ENCODE measurements at regions of chr22 and their contacts with region 1.

Region 1: GRCh38 chr22:29603358-29604075 is at the start of gene NF2:
- DNase-seq: peak; percentile 100
- H3K4me3 ChIP-seq: peak within 1 kb of the TSS; percentile 98 to 99 (median 98)
- H3K27ac ChIP-seq: peak within 1 kb of the TSS; percentile 86
- H3K4me1 ChIP-seq: peaks cover 35% of the 10 kb centered on the region
- H3K27me3 ChIP-seq: no peaks in the 10 kb centered on the region
- CTCF ChIP-seq: no peak
- POLR2A ChIP-seq: peak; percentile 82
- total RNA-seq, gene NF2: 114 and 115 TPM in 2 replicates

Region 2: GRCh38 chr22:29470159-29470855 is 133.2 kb before region 1 on chr22:
- CTCF ChIA-PET with region 1: no interaction called
- POLR2A ChIA-PET with region 1: no interaction called
- dilution Hi-C with region 1: no loop called
- intact Hi-C with region 1: no loop called
- DNase-seq: peak; percentile 26
- H3K4me3 ChIP-seq: no peak overlapping the region
- H3K27ac ChIP-seq: no peak overlapping the region
- H3K4me1 ChIP-seq: no peaks in the 10 kb centered on the region
- H3K27me3 ChIP-seq: peaks cover 8 to 14% of the 10 kb centered on the region in 2 experiments
- CTCF ChIP-seq: peak; percentile 93 to 95
- POLR2A ChIP-seq: no peak

Region 3: GRCh38 chr22:29553351-29554224 is 49.9 kb before region 1 on chr22 and contains the start of gene THOC5:
- CTCF ChIA-PET with region 1: interaction called, 6 read pairs
- POLR2A ChIA-PET with region 1: interaction called, 4 read pairs
- dilution Hi-C with region 1: no loop called
- intact Hi-C with region 1: loop called (anchors 1 kb)
- DNase-seq: peak; percentile 97
- H3K4me3 ChIP-seq: peak within 1 kb of the TSS; percentile 43 to 91 (median 47)
- H3K27ac ChIP-seq: peak within 1 kb of the TSS; percentile 67
- H3K4me1 ChIP-seq: peaks cover 8% of the 10 kb centered on the region
- H3K27me3 ChIP-seq: no peaks in the 10 kb centered on the region
- CTCF ChIP-seq: peak; percentile 77 to 81
- POLR2A ChIP-seq: peak; percentile 84
- total RNA-seq, gene THOC5: 73.8 and 82.9 TPM in 2 replicates

Region 4: DNA sequence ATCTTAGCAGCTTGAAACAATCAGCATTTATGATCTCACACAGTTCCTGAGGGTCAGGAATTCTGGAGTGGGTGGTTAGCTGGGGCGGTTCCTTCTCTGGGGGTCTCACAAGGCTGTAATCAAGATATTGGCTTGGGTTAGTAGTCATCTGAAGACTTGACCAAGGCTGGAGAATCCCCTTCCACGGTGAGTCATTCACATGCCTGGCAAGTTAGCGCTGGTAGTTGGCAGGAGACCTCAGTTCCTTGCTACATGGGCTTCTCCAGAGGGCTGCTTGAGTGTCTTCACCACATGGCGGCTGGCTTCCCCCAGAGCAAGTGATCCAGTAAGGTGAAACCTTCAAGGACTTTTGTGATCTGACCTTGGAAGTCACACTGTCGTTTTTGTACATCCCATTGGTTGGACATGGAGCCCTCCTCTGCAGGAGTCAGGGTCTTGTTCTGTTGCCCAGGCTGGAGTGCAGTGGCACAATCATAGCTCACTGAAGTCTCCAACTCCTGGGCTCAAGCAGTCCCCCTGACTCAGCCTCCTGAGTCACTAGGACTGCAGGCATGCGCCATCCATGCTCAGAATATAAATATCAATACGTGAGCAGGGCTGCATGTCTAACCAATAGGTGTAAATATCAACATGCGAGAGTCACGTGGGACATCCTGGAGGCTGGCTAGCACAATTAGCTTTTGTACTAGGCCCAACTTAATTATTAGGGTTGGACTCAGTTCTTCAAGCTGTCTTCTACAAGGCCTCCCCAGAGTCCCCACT is 15.4 kb before region 1 on chr22:
- CTCF ChIA-PET with region 1: interaction called, 28 read pairs
- POLR2A ChIA-PET with region 1: no interaction called
- dilution Hi-C with region 1: no loop called
- intact Hi-C with region 1: no loop called
- DNase-seq: peak; percentile 42
- H3K4me3 ChIP-seq: no peak overlapping the region
- H3K27ac ChIP-seq: no peak overlapping the region
- H3K4me1 ChIP-seq: no peaks in the 10 kb centered on the region
- H3K27me3 ChIP-seq: no peaks in the 10 kb centered on the region
- CTCF ChIP-seq: no peak
- POLR2A ChIP-seq: no peak

Region 5: DNA sequence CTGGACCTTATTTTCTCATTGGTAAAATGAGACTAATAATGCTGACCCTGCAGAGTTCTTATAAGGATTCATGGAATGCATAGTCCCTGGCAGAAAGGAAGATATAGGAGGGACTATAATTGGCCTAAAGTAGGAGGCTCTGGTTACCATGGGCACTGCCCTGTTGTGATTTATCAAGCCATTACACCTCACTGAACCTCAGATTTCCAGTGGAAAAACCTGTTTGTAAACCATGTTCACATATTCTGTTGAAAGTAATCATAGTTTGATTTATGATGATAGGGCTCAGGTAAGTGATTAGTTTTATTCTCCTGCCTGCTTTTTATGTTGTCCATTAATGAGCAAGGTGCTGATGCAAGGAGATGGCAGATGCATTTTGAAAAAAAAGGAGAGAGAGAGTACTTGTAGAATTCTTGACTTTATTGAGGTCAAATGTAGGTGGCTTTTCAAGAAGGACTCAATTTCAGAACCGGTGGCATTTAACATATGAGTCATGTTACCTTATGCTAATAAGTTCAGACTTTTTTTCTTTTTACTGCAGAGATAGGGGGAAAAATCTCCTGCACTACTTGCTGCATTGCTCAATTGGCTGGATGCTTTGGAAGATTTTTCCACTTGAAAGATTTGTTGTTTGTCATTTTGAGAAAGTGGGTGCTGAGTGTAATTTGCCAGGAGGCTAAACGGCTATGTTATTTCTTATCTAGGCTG is 14.6 kb after region 1 on chr22:
- CTCF ChIA-PET with region 1: interaction called, 23 read pairs
- POLR2A ChIA-PET with region 1: interaction called, 8 read pairs
- dilution Hi-C with region 1: no loop called
- intact Hi-C with region 1: loop called (anchors 1 kb)
- DNase-seq: no peak
- H3K4me3 ChIP-seq: no peak overlapping the region
- H3K27ac ChIP-seq: peak overlapping the region; percentile 4
- H3K4me1 ChIP-seq: peaks cover 38% of the 10 kb centered on the region
- H3K27me3 ChIP-seq: no peaks in the 10 kb centered on the region
- CTCF ChIP-seq: no peak
- POLR2A ChIP-seq: no peak